Activated CD4-positive, alpha-beta T cell treated with anti-CD3 and anti-CD28 coated beads for 36 hours (primary cell): ENCODE measurements at regions of chr17 and their contacts with region 1.

Region 1: DNA sequence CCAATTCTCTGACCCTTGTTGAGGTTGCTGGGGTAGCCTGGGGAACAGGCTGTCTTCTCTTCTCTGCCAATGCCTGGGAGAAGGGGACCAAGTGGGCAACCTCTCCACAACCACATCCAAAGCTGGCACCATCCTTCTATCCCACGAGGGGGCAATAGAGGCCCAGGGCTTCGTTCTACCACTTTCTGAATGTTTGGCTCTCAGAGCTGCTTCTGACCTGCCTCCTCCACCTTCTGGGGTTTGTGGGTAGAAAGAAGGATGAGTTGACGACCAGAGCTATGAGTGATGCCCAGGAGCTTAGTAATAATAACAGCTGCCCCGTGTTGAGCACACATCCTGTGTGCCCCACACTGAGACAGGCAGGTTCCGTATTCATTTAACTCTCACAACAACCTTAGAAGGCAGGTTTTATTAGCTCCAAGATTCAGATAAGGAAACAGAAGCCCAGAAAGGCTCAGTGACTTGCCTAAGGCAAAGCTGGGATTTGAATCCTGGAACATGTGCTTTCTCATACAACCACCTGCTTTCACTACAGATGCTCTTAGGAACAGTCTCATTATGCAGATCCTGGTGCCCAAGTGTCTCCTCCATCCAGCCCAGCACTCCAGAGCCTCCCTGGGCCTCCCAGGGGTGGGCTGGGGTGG is 11.1 kb downstream of the TSPOAP1 start:
- DNase-seq: peak; percentile 86
- ATAC-seq: peak; percentile 100
- H3K4me3 Mint-ChIP-seq: no peak overlapping the region
- H3K27ac Mint-ChIP-seq: peak overlapping the region; percentile 72
- H3K4me1 Mint-ChIP-seq: peaks cover 14% of the 10 kb centered on the region
- H3K27me3 Mint-ChIP-seq: no peaks in the 10 kb centered on the region

Region 2: GRCh38 chr17:57902800-57903759 is 414.5 kb before region 1 on chr17:
- CTCF ChIA-PET with region 1: no interaction called
- POLR2A ChIA-PET with region 1: no interaction called
- intact Hi-C with region 1: no loop called
- DNase-seq: no peak
- ATAC-seq: no peak
- H3K4me3 Mint-ChIP-seq: no peak overlapping the region
- H3K27ac Mint-ChIP-seq: no peak overlapping the region
- H3K4me1 Mint-ChIP-seq: peaks cover 3% of the 10 kb centered on the region
- H3K27me3 Mint-ChIP-seq: no peaks in the 10 kb centered on the region

Region 3: GRCh38 chr17:58303971-58304725 is 13.4 kb before region 1 on chr17:
- CTCF ChIA-PET with region 1: interaction called, 38 read pairs
- POLR2A ChIA-PET with region 1: interaction called, 4 read pairs
- intact Hi-C with region 1: no loop called
- DNase-seq: peak; percentile 80
- ATAC-seq: peak; percentile 97
- H3K4me3 Mint-ChIP-seq: no peak overlapping the region
- H3K27ac Mint-ChIP-seq: no peak overlapping the region
- H3K4me1 Mint-ChIP-seq: peaks cover 3% of the 10 kb centered on the region
- H3K27me3 Mint-ChIP-seq: no peaks in the 10 kb centered on the region

Region 4: GRCh38 chr17:58337600-58338453 is 20.3 kb after region 1 on chr17:
- CTCF ChIA-PET with region 1: interaction called, 34 read pairs
- POLR2A ChIA-PET with region 1: interaction called, 16 read pairs
- intact Hi-C with region 1: no loop called
- DNase-seq: peak; percentile 97
- ATAC-seq: peak; percentile 57
- H3K4me3 Mint-ChIP-seq: peak overlapping the region; percentile 100
- H3K27ac Mint-ChIP-seq: peak overlapping the region; percentile 99
- H3K4me1 Mint-ChIP-seq: peaks cover 26% of the 10 kb centered on the region
- H3K27me3 Mint-ChIP-seq: no peaks in the 10 kb centered on the region

Region 5: GRCh38 chr17:58352014-58352842 is 34.7 kb after region 1 on chr17 and contains the start of gene SUPT4H1:
- CTCF ChIA-PET with region 1: interaction called, 84 read pairs
- POLR2A ChIA-PET with region 1: interaction called, 17 read pairs
- intact Hi-C with region 1: loop called (anchors 1 kb)
- DNase-seq: peak; percentile 96
- ATAC-seq: peak; percentile 78
- H3K4me3 Mint-ChIP-seq: peak within 1 kb of the TSS; percentile 97
- H3K27ac Mint-ChIP-seq: peak within 1 kb of the TSS; percentile 98
- H3K4me1 Mint-ChIP-seq: peaks cover 38% of the 10 kb centered on the region
- H3K27me3 Mint-ChIP-seq: no peaks in the 10 kb centered on the region
- total RNA-seq, gene SUPT4H1: 106 to 129 TPM

Region 6: DNA sequence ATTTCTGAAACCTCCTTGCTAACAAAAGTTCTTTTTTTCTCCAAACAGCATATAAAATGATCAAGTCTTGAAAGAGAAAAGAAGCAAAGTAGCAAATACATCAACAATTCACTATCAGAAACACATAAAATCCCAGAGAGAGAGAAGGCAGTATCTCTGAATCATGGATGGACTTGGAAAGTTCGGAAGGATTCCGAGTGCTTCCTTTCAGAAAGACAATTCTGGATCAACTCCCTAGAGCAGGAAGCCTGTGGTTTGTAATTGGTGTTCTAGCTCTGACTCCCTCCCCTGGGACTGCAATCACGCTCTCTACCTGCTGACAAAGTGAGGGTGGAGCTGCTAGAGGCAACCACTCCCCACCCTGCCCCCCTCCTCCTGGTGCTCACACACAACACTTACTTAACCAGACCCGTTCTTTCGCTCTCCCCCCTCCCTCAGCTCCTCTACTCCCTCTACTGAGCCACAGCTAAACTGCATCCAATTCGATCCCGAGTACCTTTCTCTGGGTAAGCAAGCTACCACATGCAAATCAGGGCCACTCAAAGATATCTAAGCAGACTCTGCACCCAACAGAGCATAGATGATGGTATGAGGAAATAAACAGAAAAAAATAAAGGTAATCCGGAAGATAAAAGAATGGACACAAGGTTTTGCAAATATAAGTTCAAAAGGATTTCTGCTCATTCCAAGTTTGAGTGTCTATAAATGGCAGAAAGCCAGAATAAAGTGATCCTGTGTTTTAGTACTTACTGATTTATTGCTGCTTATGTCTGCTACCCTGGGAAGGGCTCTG is 100.0 kb after region 1 on chr17 and contains the start of gene RNF43:
- CTCF ChIA-PET with region 1: interaction called, 94 read pairs
- POLR2A ChIA-PET with region 1: interaction called, 8 read pairs
- intact Hi-C with region 1: loop called (anchors 1 kb)
- DNase-seq: peak; percentile 94
- ATAC-seq: peak; percentile 99
- H3K4me3 Mint-ChIP-seq: peak within 1 kb of the TSS; percentile 9
- H3K27ac Mint-ChIP-seq: peak within 1 kb of the TSS; percentile 38
- H3K4me1 Mint-ChIP-seq: peaks cover 32% of the 10 kb centered on the region
- H3K27me3 Mint-ChIP-seq: no peaks in the 10 kb centered on the region
- total RNA-seq, gene RNF43: 0.71 to 1.0 TPM

Region 7: DNA sequence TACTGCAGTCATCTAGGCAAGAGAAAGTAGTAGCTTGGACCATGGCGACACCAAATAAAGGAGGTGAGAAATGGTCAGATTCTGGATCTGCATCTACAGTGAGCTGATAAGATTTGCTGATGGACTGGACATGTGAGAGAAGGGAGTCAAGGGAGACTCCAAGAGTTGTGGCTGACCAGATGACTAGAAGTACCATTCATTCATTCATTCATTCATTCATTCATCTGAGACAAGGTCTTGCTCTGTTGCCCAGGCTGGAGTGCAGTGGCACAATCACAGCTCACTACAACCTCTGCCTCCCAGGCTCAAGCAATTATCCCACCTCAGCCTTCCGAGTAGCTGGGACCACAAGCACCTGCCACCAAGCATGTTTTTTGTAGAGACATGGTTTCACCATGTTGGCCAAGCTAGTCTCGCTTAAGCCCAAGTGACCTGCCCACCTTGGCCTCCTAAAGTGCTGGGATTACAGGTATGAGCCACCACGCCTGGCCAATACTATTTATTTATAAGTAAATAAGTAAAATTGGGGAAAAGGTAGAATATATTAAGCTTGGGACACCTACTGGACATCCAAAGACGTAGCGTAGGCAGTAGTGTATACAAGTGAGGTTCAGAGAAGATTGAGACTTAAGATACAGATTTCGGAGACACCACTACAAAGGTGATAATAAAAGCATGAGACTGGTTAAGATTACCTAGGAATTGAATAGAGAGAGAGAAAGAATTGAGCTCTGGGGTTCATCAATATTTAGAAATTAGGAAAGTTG is 115.4 kb after region 1 on chr17:
- CTCF ChIA-PET with region 1: interaction called, 18 read pairs
- POLR2A ChIA-PET with region 1: no interaction called
- intact Hi-C with region 1: no loop called
- DNase-seq: no peak
- ATAC-seq: no peak
- H3K4me3 Mint-ChIP-seq: no peak overlapping the region
- H3K27ac Mint-ChIP-seq: no peak overlapping the region
- H3K4me1 Mint-ChIP-seq: no peaks in the 10 kb centered on the region
- H3K27me3 Mint-ChIP-seq: no peaks in the 10 kb centered on the region

Region 8: GRCh38 chr17:58487589-58488427 is 170.3 kb after region 1 on chr17 and contains the start of gene HSF5:
- CTCF ChIA-PET with region 1: interaction called, 10 read pairs
- POLR2A ChIA-PET with region 1: no interaction called
- intact Hi-C with region 1: loop called (anchors 1 kb)
- DNase-seq: peak; percentile 83
- ATAC-seq: peak; percentile 87
- H3K4me3 Mint-ChIP-seq: peak within 1 kb of the TSS; percentile 52
- H3K27ac Mint-ChIP-seq: peak within 1 kb of the TSS; percentile 47
- H3K4me1 Mint-ChIP-seq: peaks cover 14% of the 10 kb centered on the region
- H3K27me3 Mint-ChIP-seq: no peaks in the 10 kb centered on the region
- total RNA-seq, gene HSF5: 2.6 to 3.1 TPM